Breast epithelium (tissue), 4 donors: ENCODE measurements at regions of chr18 and their contacts with region 1.

Region 1: GRCh38 chr18:12236934-12237832 is 17.0 kb upstream of the CIDEA start:
- DNase-seq: peak; percentile 46 to 78
- H3K4me3 ChIP-seq: peak overlapping the region in 1 of 3 donors; percentile 33
- H3K27ac ChIP-seq: no peak overlapping the region
- H3K4me1 ChIP-seq: no peaks in the 10 kb centered on the region
- H3K27me3 ChIP-seq: peaks cover 0 to 3% of the 10 kb centered on the region in 2 donors
- CTCF ChIP-seq: peak; percentile 47 to 82 (median 54)
- POLR2A ChIP-seq: no peak

Region 2: DNA sequence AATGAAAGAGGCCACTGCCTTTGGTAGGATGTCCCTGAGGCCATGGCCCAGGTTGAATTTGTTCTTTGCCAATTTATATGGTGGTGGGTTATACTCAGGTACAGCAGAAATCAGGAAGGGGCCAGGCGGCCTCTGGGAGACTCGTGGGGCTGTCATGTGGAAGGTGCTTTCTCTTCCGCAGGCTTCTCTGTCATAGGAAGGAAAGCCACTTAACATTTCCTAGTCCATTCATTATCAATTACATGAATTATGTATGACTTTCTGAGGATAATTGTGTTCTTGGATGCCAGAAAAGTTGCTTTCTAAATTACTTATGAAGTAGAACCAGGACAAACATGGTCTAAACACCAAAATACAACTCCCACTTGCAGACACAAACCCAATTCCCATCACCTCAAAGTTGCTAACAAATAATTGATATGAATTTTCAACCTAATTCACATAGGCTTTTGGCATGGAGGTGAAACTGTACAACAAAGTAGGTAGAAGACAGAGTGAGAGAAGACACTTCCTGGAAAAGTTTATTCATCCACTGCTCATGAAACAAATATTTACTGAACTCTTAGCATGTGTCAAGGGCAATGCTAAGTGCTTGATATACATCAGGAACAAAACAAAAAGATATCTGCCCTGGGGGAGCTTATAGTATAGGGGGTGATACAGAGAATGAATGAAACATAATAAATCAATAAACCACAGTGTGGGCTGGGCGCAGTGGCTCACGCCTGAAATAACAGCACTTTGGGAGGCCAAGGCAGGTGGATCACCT is 436.4 kb before region 1 on chr18:
- intact Hi-C with region 1: no loop called
- DNase-seq: no peak
- H3K4me3 ChIP-seq: no peak overlapping the region
- H3K27ac ChIP-seq: no peak overlapping the region
- H3K4me1 ChIP-seq: no peaks in the 10 kb centered on the region
- H3K27me3 ChIP-seq: no peaks in the 10 kb centered on the region
- CTCF ChIP-seq: no peak
- POLR2A ChIP-seq: no peak

Region 3: DNA sequence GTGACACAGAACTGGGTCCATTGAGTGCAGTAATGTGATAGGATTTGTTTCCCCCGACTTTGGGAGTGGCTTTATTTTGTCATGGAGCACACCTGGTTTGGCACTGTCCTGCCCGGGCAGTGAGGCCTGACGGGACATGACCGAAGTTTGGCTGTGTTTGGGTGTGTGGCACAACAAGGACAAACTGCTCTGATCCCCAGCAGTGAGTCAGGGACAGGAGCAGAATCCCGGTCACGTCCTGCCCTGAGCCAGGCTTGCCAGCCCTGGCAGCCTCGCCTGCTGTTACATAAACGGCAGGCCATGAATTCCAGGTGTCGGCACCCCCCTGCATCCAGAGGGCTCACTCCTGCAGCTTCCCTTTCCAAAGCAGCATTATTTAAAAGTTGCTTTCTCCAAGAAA is 210.1 kb before region 1 on chr18:
- intact Hi-C with region 1: loop called (anchors 10 kb)
- DNase-seq: peak in 1 of 2 donors; percentile 77
- H3K4me3 ChIP-seq: no peak overlapping the region
- H3K27ac ChIP-seq: peak overlapping the region; percentile 65 to 74
- H3K4me1 ChIP-seq: no peaks in the 10 kb centered on the region
- H3K27me3 ChIP-seq: no peaks in the 10 kb centered on the region
- CTCF ChIP-seq: no peak
- POLR2A ChIP-seq: no peak